SK-N-SH (cell line): ENCODE measurements at regions of chr3 and their contacts with region 1.

Region 1: DNA sequence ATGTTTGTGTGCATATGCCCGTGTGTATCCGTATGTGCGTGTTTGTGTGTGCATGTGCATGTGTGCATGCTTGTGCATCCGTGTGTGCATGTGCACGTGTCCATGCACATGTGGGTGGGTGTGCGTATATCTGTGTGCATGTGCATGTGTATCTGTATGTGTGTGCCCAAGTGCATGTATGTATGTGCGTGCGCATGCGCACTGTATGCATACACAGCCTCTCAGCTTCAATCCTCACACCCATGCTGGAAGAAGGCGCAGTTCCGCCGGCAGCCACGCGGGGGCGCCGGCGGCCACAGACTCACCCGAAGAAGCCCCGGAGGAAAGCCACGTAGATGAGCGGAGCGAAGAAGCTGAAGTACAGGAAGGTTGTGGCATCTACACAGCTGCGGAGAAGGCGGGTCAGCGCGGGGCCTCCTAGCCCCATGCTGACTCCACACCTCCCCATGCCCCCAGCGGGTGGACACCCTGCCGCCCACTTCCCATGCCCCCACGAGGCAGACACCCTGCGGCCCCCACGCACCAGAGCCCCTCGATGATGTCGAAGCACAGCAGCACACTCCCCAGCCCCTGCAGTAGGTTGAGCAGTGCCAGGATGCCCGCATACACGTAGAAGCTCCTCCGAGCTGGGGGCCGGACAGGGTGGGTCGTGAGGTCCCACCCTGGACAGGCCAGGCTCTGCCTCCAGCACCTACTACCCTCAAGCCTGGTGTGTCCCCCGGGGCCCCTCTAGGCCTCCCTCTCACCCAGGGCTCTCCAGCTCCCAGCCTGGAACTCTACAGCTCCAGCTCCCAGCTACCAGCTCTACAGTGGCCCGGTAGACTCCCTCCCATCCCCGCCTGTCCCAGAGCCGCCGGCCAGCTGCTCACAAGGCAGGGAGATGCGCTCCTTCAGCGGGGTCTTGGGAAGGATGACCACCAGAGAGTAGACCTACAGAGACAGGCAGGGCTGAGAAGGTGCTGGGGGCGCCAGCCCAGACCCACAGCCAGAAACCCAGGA is 15.4 kb downstream of the TPRA1 start:
- DNase-seq: peak; percentile 97
- H3K4me3 ChIP-seq: peak overlapping the region in 1 of 2 experiments; percentile 23; a peak in 1 of 4 replicates
- H3K27ac ChIP-seq: no peak overlapping the region
- H3K4me1 ChIP-seq: peaks cover 0 to 7% of the 10 kb centered on the region in 2 experiments; a peak in 1 of 4 replicates
- H3K27me3 ChIP-seq: no peaks in the 10 kb centered on the region
- CTCF ChIP-seq: peak; percentile 98
- EP300 ChIP-seq: no peak
- RAD21 ChIP-seq: peak; percentile 85

Region 2: DNA sequence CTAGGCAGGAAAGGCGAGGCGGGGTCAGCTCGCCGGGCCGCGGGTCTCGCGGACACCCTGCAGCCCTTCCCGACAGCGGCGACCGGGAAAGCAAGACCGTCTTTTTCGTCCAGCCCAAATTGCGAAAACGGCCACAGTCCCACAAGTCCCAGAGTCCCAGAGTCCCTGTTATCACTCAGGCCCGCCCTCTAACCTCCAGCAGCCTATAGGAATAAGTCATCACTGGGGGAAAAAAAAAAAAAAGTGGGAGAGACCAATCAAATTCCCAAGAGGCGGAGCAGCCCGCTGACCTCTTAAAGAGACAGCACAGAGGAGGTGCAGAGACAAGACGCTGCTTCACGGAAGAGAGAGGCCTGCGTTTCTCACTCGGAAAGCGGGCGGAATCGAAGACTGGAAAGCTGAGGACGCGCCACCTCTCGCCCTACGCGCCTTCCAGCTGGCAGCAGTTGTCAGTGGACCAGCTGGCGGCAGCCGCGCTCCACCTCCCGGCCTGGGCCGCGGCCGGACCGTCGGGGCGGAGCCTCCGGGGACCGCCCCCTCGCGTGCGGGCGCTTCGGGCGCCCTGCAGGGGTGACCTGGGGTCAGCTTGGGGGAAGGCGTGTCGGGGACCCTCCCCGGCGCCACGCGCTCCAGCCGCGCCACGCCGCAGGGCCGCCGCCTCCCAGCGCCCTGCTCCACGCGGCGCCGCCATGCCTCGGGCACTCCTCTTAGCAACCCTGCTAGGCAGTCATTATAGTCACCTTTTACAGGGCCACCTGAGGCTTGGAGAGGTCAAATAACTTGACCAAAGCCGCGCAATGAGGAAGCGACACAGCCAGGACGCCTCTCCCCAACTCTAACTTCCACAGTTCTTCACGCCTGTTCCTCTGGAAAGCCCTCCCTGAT is 15.7 kb after region 1 on chr3 and contains the start of gene TPRA1:
- CTCF ChIA-PET with region 1: interaction called, 95 read pairs
- POLR2A ChIA-PET with region 1: no interaction called
- DNase-seq: peak; percentile 98
- H3K4me3 ChIP-seq: peak within 1 kb of the TSS; percentile 92 to 95
- H3K27ac ChIP-seq: peak within 1 kb of the TSS; percentile 81 to 89
- H3K4me1 ChIP-seq: peaks cover 4 to 22% of the 10 kb centered on the region in 2 experiments; a peak in 3 of 4 replicates
- H3K27me3 ChIP-seq: no peaks in the 10 kb centered on the region
- CTCF ChIP-seq: peak; percentile 34; the same call in 1 of the 2 replicates
- EP300 ChIP-seq: no peak
- RAD21 ChIP-seq: peak; percentile 60
- polyA plus RNA-seq, gene TPRA1: 26.3 and 31.6 TPM in 2 replicates

Region 3: DNA sequence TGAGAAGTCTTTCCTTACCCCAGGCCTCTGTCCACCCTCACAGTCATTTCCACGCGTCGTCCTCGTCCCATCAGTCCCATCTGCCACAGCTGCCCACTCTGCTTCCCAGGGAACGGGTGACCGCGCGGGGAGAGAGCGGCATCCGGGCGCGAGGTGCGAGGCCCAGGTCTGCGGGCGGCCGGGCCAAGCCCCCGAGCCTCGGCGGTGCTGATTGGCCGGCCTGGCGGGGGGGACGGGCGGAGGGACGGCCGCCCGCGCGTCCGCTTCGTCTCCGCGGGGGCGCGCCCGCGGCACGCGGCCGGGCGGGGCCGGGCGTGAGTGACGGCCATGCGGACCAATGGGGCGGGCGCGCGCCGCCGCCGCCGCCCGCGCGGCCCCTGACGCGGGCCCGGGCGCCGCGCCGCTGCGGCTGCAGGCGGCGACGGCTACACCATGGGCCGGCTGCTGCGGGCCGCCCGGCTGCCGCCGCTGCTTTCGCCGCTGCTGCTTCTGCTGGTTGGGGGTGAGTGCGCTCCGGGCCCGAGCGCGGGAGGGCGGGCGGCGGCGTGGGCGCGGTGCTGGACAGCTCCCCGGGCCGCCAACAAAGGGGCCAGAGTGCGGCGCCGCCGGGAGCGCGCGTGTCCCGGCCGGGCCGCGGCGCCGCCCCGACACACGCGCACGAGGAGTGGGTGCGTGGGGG is 53.7 kb after region 1 on chr3 and contains the start of gene PODXL2:
- CTCF ChIA-PET with region 1: interaction called, 19 read pairs
- POLR2A ChIA-PET with region 1: no interaction called
- DNase-seq: peak; percentile 99
- H3K4me3 ChIP-seq: peak within 1 kb of the TSS; percentile 62 to 64
- H3K27ac ChIP-seq: peak within 1 kb of the TSS in 1 of 2 experiments; percentile 44; a peak in 1 of 4 replicates
- H3K4me1 ChIP-seq: peaks cover 0 to 32% of the 10 kb centered on the region in 2 experiments; a peak in 2 of 4 replicates
- H3K27me3 ChIP-seq: no peaks in the 10 kb centered on the region
- CTCF ChIP-seq: no peak
- EP300 ChIP-seq: no peak
- RAD21 ChIP-seq: no peak
- polyA plus RNA-seq, gene PODXL2: 27.5 and 28.8 TPM in 2 replicates

Region 4: DNA sequence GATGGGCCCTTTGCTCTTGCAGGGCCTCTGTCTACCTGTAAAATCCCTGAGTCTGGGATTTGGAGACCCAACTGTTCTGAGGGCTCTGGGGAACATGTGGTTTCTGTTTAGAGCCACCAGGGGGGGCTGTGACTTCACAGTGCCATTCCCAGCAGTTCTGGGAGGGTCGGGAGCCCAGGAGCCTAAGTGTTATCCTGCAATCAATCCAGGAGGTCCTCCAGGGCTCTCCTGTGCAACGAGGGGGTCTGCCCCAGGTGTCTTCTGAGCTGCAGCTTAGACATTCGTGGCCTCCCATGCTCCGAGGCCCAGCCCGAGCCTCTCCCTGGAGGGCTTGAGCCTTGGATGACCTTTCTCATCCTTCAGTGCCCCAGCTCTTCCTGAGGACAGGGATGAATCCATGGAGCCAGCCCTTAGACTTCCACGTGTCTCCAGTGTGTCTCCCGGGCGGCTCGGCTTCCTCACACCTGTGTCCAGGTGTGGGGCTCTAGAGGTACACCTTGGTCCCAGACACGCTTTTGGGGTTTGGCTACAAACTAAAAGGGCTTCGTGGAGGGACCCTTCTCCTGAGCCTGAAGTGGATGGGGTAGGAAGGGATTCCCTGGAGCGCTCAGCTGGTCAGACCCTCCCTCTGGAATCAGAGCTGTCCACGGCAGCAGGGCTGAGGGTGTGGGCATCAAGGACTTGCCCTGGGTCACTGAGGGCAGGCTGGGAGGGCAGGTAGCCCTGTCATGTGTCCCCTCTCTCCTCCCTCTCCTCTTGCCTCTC is 77.2 kb after region 1 on chr3:
- CTCF ChIA-PET with region 1: interaction called, 14 read pairs
- POLR2A ChIA-PET with region 1: no interaction called
- DNase-seq: peak; percentile 79
- H3K4me3 ChIP-seq: no peak overlapping the region; a peak in 1 of 4 replicates
- H3K27ac ChIP-seq: no peak overlapping the region
- H3K4me1 ChIP-seq: peaks cover 0 to 8% of the 10 kb centered on the region in 2 experiments; a peak in 2 of 4 replicates
- H3K27me3 ChIP-seq: no peaks in the 10 kb centered on the region
- CTCF ChIP-seq: peak; percentile 89
- EP300 ChIP-seq: no peak
- RAD21 ChIP-seq: peak; percentile 88